Calu3 (cell line): ENCODE measurements at regions of chr17 and their contacts with region 1.

Region 1: DNA sequence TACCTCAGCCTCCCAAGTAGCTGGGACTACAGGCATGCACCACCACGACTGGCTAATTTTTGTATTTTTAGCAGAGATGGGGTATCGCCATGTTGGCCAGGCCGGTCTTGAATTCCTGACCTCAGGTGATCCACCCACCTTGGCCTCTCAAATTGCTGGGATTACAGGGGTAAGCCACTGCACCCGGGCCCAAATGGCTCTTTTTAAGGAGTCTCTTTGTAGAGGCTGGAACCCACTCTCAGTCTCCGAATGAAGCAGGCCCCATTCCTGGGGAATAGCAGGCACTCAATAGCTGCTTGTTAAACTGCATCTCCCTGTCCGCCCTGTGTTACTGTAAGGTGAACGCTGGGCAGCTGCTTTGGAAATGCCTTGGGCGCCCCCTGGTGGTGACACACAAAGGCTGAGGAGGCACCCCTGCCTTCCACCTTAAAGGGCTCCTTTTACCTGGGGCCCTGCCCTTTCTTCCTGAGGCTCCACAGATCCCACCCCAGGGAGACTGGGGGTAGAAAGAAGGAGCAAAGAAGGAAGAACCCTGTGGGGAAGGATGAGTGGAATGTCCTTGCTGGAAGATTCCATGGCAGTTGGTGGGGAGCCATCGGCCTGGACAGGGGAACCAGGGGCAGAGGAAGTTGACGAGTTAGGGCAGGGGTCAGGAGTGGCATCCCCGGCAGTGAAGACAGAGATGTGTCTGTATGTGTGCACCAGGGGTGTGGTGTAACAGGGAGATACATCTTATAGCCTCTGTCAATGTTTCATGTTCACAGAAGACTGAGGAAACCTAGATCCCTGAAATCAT is 6.1 kb upstream of the SP2 start:
- DNase-seq: peak; percentile 98
- H3K4me3 Mint-ChIP-seq: no peak overlapping the region
- H3K27ac Mint-ChIP-seq: no peak overlapping the region
- H3K4me1 Mint-ChIP-seq: peaks cover 15% of the 10 kb centered on the region
- H3K27me3 Mint-ChIP-seq: peaks cover 4% of the 10 kb centered on the region
- CTCF ChIP-seq: peak; percentile 99

Region 2: GRCh38 chr17:47840740-47841603 is 49.0 kb before region 1 on chr17 and contains the start of gene SCRN2:
- CTCF ChIA-PET with region 1: interaction called, 137 read pairs
- intact Hi-C with region 1: loop called (anchors 1 kb)
- DNase-seq: peak; percentile 98
- H3K4me3 Mint-ChIP-seq: peak within 1 kb of the TSS; percentile 92
- H3K27ac Mint-ChIP-seq: peak within 1 kb of the TSS; percentile 31
- H3K4me1 Mint-ChIP-seq: peaks cover 26% of the 10 kb centered on the region
- H3K27me3 Mint-ChIP-seq: no peaks in the 10 kb centered on the region
- CTCF ChIP-seq: peak; percentile 99
- total RNA-seq, gene SCRN2: 34.8 and 37.0 TPM in 2 replicates

Region 3: DNA sequence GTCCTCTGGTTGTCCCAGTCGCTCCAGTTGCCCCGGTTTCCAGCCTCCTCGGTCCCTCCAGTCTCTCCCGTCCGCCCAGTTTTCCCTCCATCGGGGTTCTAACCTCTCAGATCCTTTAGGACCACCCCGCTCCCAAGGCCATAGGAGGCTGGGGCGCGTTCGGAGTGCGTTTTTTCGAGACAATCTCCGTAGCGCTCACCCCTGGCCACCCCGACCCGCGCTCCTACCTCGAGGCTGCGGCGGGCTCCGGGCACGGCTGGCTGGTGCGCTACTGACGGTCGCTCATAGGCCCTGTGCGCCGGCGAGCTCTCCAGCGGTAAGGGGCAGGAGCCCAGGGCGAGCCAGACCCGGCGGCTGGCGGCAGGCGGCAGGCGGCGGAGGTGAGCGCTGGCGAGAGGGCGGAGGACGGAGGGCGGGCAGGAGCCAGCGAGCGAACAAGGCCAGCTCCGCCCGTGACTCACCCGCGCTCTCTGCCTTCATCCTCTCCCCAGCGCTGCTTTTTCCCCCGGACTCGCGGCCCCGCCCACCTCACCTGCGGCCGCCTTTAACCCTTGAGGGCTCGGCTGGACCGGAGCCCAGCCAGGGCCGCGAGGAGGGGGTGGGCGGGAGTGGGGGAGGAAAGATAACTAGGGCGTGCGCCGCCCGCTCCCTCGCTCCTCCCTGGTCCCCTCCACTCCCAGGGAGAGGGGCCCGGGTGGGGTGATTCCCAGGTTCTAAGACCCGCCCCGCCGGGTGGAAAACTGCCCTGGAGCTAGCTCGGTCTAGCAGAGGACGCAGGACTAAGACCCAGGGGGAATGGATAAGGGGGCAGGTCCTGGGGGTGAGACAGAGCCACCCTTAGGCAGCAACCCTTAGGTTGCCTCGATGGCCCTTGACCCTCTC is 39.0 kb before region 1 on chr17 and contains the start of gene SP6:
- CTCF ChIA-PET with region 1: interaction called, 137 read pairs
- intact Hi-C with region 1: no loop called
- DNase-seq: peak; percentile 97
- H3K4me3 Mint-ChIP-seq: peak within 1 kb of the TSS; percentile 75
- H3K27ac Mint-ChIP-seq: no peak within 1 kb of the TSS
- H3K4me1 Mint-ChIP-seq: peaks cover 22% of the 10 kb centered on the region
- H3K27me3 Mint-ChIP-seq: peaks cover 63% of the 10 kb centered on the region
- CTCF ChIP-seq: peak; percentile 21
- total RNA-seq, gene SP6: 1.1 and 1.2 TPM in 2 replicates